ENCODE measurements at regions of chr6 and their contacts with region 1.

Region 1: DNA sequence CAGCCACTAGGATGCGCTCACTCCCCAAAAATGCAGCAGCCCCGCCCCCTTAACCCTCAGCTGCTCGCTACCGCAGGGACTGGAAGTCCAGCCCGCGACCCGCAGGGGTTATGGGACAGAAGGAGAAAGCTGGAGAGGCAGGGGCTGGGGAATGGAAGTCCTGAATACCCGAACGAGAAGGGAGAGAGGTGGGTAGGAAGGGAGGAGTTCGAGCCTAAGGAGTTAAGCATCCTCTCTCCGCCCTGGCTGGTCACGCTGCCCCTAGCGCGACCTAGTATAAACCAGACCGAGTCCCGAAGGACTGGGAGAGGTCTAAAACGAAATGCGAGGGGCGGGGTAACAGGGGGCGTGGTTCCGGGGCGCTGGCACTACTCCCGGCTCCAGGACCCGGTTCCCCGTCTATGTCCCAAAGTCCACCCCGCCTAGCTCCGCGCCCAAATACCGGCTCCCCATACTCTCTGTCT is 448 bp upstream of the DDAH2 start:
- DNase-seq: peak; percentile 87
- ATAC-seq: peak; percentile 72
- H3K4me3 Mint-ChIP-seq: peak overlapping the region; percentile 86
- H3K27ac Mint-ChIP-seq: peak overlapping the region; percentile 80
- H3K4me1 Mint-ChIP-seq: peaks cover 65% of the 10 kb centered on the region
- H3K27me3 Mint-ChIP-seq: no peaks in the 10 kb centered on the region

Region 2: DNA sequence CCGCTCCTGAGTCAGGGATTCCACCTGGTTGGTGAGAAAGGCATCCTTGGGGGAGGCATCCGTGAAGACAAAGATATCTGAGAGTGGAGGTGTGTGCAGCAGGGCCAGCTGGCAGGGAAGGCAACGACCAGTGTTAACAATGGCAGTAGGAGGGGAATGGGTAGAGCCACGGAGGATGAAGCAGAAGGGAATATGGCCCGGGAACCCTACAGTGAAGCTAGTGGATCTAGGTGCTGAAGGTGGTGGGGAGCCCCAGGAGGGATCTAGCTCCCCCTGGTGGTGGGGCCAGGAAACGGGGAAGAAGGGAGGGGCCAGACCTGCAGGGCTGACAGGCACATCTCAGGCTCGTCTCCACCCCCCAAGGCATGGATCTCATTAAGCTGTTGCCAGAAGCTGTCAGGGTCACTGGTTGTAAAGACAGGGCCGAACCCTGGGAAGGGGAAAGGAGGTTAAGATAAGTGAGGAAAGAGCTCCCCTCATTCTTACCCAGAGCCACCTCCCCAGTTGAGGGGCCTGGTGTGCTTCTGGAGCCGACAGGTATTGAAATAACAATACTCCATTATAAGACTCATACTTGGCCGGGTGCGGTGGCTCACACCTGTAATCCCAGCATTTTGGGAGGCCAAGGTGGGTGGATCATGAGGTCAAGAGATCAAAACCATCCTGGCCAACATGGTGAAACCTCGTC is 40.3 kb after region 1 on chr6:
- CTCF ChIA-PET with region 1: interaction called, 44 read pairs
- DNase-seq: peak; percentile 92
- ATAC-seq: peak; percentile 91
- H3K4me3 Mint-ChIP-seq: no peak overlapping the region
- H3K27ac Mint-ChIP-seq: peak overlapping the region; percentile 16
- H3K4me1 Mint-ChIP-seq: peaks cover 31% of the 10 kb centered on the region
- H3K27me3 Mint-ChIP-seq: no peaks in the 10 kb centered on the region

Region 3: GRCh38 chr6:31806465-31807272 is 77.1 kb after region 1 on chr6 and contains the start of gene LSM2:
- CTCF ChIA-PET with region 1: interaction called, 11 read pairs
- DNase-seq: peak; percentile 98
- ATAC-seq: peak; percentile 98
- H3K4me3 Mint-ChIP-seq: peak within 1 kb of the TSS; percentile 94
- H3K27ac Mint-ChIP-seq: peak within 1 kb of the TSS; percentile 89
- H3K4me1 Mint-ChIP-seq: peaks cover 43% of the 10 kb centered on the region
- H3K27me3 Mint-ChIP-seq: no peaks in the 10 kb centered on the region
- total RNA-seq, gene LSM2: 124 to 129 TPM

Region 4: GRCh38 chr6:31815025-31815838 is 85.7 kb after region 1 on chr6 and contains the starts of genes HSPA1A and HSPA1L:
- CTCF ChIA-PET with region 1: interaction called, 14 read pairs
- DNase-seq: peak; percentile 89
- ATAC-seq: peak; percentile 41
- H3K4me3 Mint-ChIP-seq: peak within 1 kb of the TSS; percentile 91
- H3K27ac Mint-ChIP-seq: peak within 1 kb of the TSS; percentile 95
- H3K4me1 Mint-ChIP-seq: peaks cover 56% of the 10 kb centered on the region
- H3K27me3 Mint-ChIP-seq: no peaks in the 10 kb centered on the region
- total RNA-seq, gene HSPA1A: 124 to 137 TPM
- total RNA-seq, gene HSPA1L: 2.9 to 3.1 TPM